Sigmoid colon (tissue), 7 donors: ENCODE measurements at regions of chr7 and their contacts with region 1.

Region 1: DNA sequence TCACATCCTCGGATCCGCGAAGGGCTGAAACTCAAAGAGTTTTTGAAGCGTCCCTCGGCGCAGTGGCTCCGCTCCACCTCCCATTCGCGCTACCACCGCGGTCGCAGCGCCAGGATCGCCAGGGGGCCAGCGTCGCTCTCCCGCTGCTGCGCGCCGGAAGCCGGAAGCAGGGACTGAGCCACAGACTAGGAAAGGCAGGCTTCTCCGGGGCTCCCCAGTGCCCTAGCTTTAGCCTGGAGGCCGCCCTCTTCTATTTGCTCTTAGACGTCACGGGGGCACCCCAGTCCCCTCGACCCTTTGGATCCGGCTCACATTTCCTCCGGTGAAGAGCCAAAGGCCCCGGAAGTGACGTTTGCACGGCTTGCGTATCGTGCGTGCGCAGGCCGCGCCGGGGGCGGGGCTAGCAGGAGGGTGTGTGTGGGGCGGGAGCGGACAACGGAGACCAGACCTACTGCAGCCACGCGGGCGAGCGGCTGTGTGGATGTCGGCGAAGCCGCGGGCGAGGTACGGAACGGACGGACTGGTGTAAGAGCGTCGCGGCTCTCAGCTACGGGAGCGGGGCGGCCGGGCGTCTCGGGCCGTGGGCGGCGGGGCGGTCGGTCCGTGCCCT is 25.5 kb downstream of the KCTD7 start:
- DNase-seq: peak; percentile 99
- H3K4me3 ChIP-seq: peak overlapping the region; percentile 77 to 90 (median 82)
- H3K27ac ChIP-seq: peak overlapping the region; percentile 96 to 98 (median 98)
- H3K4me1 ChIP-seq: peaks cover 0 to 24% (median 23%) of the 10 kb centered on the region in 4 donors
- H3K27me3 ChIP-seq: no peaks in the 10 kb centered on the region
- CTCF ChIP-seq: peak in 1 of 4 experiments; percentile 14
- EP300 ChIP-seq: peak in 2 of 4 donors; percentile 45 to 86
- POLR2A ChIP-seq: peak; percentile 92 to 96

Region 2: GRCh38 chr7:66557608-66558143 is 96.6 kb before region 1 on chr7:
- intact Hi-C with region 1: loop called (anchors 5 kb)
- DNase-seq: peak; percentile 86
- H3K4me3 ChIP-seq: peak overlapping the region in 1 of 4 donors; percentile 6
- H3K27ac ChIP-seq: peak overlapping the region; percentile 11 to 19 (median 14)
- H3K4me1 ChIP-seq: peaks cover 0 to 13% (median 10%) of the 10 kb centered on the region in 4 donors
- H3K27me3 ChIP-seq: no peaks in the 10 kb centered on the region
- CTCF ChIP-seq: peak; percentile 95 to 99 (median 97)
- EP300 ChIP-seq: no peak
- POLR2A ChIP-seq: no peak

Region 3: GRCh38 chr7:66591799-66592596 is 62.2 kb before region 1 on chr7:
- intact Hi-C with region 1: loop called (anchors 1 kb)
- DNase-seq: peak; percentile 97
- H3K4me3 ChIP-seq: peak overlapping the region; percentile 71 to 94 (median 87)
- H3K27ac ChIP-seq: peak overlapping the region; percentile 93 to 99 (median 96)
- H3K4me1 ChIP-seq: peaks cover 0 to 46% (median 42%) of the 10 kb centered on the region in 4 donors
- H3K27me3 ChIP-seq: no peaks in the 10 kb centered on the region
- CTCF ChIP-seq: no peak
- EP300 ChIP-seq: peak in 2 of 4 donors; percentile 20 to 56
- POLR2A ChIP-seq: peak; percentile 97 to 98

Region 4: GRCh38 chr7:66628361-66629140 is 25.7 kb before region 1 on chr7 and contains the start of gene KCTD7:
- intact Hi-C with region 1: loop called (anchors 1 kb)
- DNase-seq: peak; percentile 99
- H3K4me3 ChIP-seq: peak within 1 kb of the TSS; percentile 64 to 90 (median 72)
- H3K27ac ChIP-seq: peak within 1 kb of the TSS; percentile 95 to 97 (median 96)
- H3K4me1 ChIP-seq: peaks cover 0 to 48% (median 36%) of the 10 kb centered on the region in 4 donors
- H3K27me3 ChIP-seq: no peaks in the 10 kb centered on the region
- CTCF ChIP-seq: no peak
- EP300 ChIP-seq: no peak
- POLR2A ChIP-seq: peak; percentile 98 to 99
- total RNA-seq, gene KCTD7: 15.3 to 23.3 (median 19.6) TPM

Region 5: GRCh38 chr7:66740302-66740979 is 86.2 kb after region 1 on chr7 and contains the start of gene RABGEF1:
- intact Hi-C with region 1: loop called (anchors 1 kb)
- DNase-seq: peak; percentile 99
- H3K4me3 ChIP-seq: peak within 1 kb of the TSS; percentile 72 to 98 (median 90)
- H3K27ac ChIP-seq: peak within 1 kb of the TSS; percentile 92 to 100 (median 97)
- H3K4me1 ChIP-seq: peaks cover 0 to 36% (median 23%) of the 10 kb centered on the region in 4 donors
- H3K27me3 ChIP-seq: no peaks in the 10 kb centered on the region
- CTCF ChIP-seq: no peak
- EP300 ChIP-seq: peak in 2 of 4 donors; percentile 14 to 58
- POLR2A ChIP-seq: peak; percentile 88 to 93
- total RNA-seq, gene RABGEF1: 36.4 to 47.2 (median 41.3) TPM

Region 6: GRCh38 chr7:66844552-66845378 is 190.5 kb after region 1 on chr7:
- intact Hi-C with region 1: loop called (anchors 10 kb)
- DNase-seq: peak; percentile 99
- H3K4me3 ChIP-seq: peak overlapping the region; percentile 51 to 94 (median 72)
- H3K27ac ChIP-seq: peak overlapping the region; percentile 81 to 96 (median 93)
- H3K4me1 ChIP-seq: peaks cover 0 to 19% (median 14%) of the 10 kb centered on the region in 4 donors
- H3K27me3 ChIP-seq: no peaks in the 10 kb centered on the region
- CTCF ChIP-seq: peak; percentile 38 to 61 (median 44)
- EP300 ChIP-seq: peak in 2 of 4 donors; percentile 70 to 75
- POLR2A ChIP-seq: peak; percentile 94 to 95

Region 7: DNA sequence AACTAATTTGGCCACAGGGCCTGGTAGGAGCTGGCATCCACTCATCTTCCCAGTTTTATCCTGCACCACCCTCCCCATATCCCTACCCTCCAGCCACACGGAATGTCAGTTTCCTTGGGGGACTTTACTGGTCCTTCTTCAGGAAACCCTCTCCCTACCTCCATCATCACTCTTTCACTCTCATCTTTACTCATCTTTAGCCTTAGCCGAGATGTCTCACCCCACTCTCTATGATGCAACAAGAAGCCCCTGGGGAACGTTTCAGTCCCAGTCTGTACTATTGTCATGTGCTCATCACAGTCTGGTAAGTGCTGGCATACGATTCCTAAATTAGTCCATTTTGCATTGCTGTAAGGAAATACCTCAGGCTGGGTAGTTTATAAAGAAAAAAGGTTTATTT is 231.9 kb after region 1 on chr7:
- intact Hi-C with region 1: no loop called
- DNase-seq: no peak
- H3K4me3 ChIP-seq: no peak overlapping the region
- H3K27ac ChIP-seq: no peak overlapping the region
- H3K4me1 ChIP-seq: no peaks in the 10 kb centered on the region
- H3K27me3 ChIP-seq: no peaks in the 10 kb centered on the region
- CTCF ChIP-seq: no peak
- EP300 ChIP-seq: no peak
- POLR2A ChIP-seq: no peak

Region 8: DNA sequence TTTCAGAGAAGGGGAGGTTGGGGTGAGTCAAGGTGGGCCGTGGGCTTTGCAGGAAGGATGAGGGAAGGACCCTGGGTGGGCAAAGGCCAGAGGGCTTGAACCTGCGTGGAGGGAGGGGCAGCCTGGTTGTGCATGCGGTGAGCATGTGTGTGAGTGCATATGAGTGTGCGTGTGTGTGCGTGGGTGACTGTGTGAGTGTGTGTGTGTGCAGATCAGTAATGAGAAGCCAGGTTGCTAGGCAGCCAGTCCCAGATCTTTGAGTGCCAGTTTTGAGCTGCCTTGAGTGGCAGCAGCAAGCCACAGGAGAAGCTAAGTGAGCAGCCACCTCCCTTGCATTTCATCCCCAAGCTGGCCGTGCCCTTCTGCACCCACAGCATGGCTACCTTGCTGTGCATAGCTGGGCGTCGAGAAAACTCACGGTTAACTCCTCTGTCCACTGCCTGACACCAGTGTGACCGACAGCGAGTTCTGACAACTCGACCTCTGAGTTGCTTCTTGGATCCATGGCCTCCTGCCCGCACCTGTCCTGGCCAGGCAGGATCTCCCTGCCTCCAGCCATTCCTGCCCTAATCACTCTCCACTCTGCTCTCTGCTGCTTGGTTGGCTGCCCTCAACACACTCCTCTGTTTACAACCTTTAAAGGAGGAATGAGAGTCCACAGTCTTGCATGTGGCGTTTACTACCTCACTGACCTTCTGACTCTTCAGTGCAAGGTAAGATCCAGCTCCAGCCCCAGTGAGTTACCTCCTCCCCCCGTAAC is 1117.8 kb after region 1 on chr7:
- intact Hi-C with region 1: no loop called
- DNase-seq: no peak
- H3K4me3 ChIP-seq: no peak overlapping the region
- H3K27ac ChIP-seq: no peak overlapping the region
- H3K4me1 ChIP-seq: no peaks in the 10 kb centered on the region
- H3K27me3 ChIP-seq: peaks cover 0 to 10% (median 3%) of the 10 kb centered on the region in 3 donors
- CTCF ChIP-seq: no peak
- EP300 ChIP-seq: no peak
- POLR2A ChIP-seq: no peak